Tibial artery (tissue), 4 donors: ENCODE measurements at regions of chr1 and their contacts with region 1.

Region 1: DNA sequence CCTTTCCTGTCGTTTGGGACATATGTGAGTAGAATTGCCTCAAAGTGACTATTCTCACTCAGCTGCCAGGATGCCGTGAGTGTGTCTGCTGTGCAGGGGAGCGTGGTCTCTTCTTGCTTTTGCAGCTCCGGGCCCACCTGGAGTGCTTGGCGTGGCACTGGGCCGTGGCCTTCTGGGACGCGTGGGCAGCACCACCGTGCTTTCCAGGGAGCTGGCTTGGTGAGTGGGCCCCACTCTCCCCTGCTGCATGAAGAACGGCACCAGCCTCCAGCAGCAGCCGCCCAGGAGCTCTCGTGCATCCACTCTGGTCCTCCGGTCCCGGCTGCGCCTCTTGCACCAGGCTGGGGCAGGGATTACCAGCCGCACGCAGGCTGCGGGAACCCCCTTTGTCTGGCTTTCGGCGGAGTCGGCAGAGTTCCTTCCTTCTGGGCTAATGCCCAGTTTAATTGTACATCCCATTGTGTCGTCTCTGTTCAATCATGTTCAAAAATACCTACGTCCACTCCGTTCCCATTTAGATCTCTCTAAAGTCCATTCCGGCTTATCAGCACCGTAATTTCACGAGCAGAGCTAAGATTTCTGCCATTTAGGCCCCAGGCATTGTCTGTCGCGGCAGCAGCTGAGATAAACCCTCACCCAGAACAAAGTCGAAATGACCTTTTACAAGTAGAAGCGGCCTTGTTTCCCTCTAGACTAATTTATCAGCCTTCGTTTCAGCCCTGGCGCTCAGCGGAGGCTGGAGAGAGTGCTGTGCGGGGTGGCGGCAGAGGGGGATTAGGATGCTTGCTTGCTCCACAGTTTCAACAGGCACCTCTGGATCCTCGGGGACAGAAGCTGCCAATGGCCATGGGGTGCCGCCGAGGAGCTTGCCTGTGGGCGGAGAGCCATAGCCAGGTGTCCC is 129.6 kb downstream of the PRDM16 start:
- DNase-seq: no peak
- H3K4me3 ChIP-seq: no peak overlapping the region
- H3K27ac ChIP-seq: peak overlapping the region; percentile 91 to 98
- H3K4me1 ChIP-seq: peaks cover 0 to 91% (median 50%) of the 10 kb centered on the region in 4 donors
- H3K27me3 ChIP-seq: no peaks in the 10 kb centered on the region
- CTCF ChIP-seq: no peak

Region 2: GRCh38 chr1:3139871-3140361 is 58.7 kb before region 1 on chr1:
- intact Hi-C with region 1: no loop called
- DNase-seq: no peak
- H3K4me3 ChIP-seq: no peak overlapping the region
- H3K27ac ChIP-seq: peak overlapping the region in 1 of 2 donors; percentile 30
- H3K4me1 ChIP-seq: peaks cover 0 to 85% (median 43%) of the 10 kb centered on the region in 4 donors
- H3K27me3 ChIP-seq: no peaks in the 10 kb centered on the region
- CTCF ChIP-seq: no peak

Region 3: DNA sequence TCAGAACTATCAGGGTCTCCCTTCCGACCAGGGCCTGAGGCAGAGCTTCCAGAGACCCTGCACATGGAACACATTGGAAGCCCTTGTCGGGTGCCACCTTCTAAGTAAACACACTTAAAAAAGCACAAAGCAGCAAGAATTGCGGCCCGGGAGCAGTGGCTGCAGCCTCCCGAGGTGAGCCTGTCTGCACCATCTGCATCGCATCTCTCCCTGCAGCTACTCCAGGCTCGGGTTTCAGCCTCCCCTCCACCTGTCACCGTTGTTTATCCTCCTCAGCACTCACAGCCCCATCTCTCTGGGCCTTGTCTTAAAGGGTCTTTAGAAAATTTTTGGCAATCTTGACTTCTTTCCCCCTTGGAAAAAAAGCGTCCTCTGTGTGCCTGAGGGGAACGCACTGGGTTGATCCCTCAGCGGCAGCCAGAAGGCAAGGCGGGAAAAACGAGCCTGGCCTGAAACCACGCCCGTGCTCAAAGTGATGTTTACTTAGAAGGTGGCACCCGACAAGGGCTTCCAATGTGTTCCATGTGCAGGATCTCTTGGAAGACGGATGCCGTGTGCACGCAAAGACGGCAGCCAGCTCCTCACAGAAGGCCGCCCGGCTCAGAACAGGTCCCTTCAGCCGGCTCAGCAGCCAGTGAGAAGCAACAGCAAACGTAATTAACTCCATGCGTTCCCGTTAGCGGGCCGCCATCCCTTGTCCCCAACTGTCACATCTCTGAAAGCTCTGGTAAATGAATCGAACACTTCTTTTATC is 160.9 kb after region 1 on chr1:
- intact Hi-C with region 1: loop called (anchors 5 kb)
- DNase-seq: no peak
- H3K4me3 ChIP-seq: no peak overlapping the region
- H3K27ac ChIP-seq: peak overlapping the region in 1 of 2 donors; percentile 94
- H3K4me1 ChIP-seq: peaks cover 5 to 77% (median 60%) of the 10 kb centered on the region in 4 donors
- H3K27me3 ChIP-seq: no peaks in the 10 kb centered on the region
- CTCF ChIP-seq: no peak